ENCODE measurements at regions of chr22 and their contacts with region 1.

Region 1: GRCh38 chr22:35582861-35583670 is 34.1 kb downstream of the MB start:
- DNase-seq: peak; percentile 67 to 88
- H3K4me3 ChIP-seq: no peak overlapping the region
- H3K27ac ChIP-seq: no peak overlapping the region
- H3K4me1 ChIP-seq: peaks cover 0 to 18% (median 4%) of the 10 kb centered on the region in 4 donors
- H3K27me3 ChIP-seq: no peaks in the 10 kb centered on the region
- CTCF ChIP-seq: peak in 5 of 7 experiments; percentile 84 to 92 (median 88)
- EP300 ChIP-seq: no peak
- POLR2A ChIP-seq: no peak

Region 2: DNA sequence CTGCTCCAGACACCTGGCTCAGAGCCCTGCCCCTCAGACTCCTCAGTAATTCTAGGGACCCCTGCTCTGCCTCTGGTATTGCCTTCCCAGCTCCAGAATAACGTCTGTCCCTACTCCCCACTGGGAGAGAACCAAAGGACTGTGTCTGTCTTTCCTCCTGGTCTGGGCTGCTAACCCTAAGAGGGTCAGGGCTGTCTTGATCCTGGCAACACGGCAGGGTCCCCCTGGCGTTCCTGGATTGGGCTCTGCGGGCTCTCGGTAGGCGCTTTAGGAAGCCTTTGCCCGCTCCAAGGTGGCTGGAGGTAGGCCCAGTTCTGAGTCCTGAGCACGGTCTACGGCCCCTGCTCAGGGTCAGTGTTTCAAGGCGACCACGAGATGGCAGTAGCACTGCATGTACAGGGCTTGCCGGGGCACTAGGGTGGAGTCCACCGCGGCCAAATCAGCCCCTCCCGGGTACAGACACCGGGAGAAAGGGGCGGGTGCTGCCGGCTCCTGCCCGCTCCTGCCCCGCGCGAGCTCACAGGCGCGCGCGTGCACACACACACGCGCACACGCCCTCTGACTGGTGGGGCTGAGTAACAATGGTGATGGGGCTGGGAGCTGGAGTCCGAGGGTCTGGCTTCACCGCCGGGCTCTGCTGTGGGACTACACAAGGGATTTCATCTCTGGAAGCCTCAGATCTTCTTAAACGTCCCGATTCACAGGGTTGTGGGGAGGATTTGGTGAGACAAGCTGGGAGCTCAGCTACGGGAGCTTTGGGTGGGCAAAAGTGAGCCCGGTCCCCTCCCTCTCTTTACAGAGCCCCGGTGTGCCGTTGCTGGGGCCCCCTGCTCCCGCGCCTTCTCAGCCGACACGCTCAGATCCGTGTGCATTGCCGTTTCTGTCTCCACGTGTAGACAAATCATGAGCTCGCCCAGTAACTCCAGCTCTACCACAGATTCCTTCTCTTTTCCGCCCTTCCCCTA is 232.2 kb before region 1 on chr22:
- intact Hi-C with region 1: loop called (anchors 5 kb)
- DNase-seq: peak; percentile 92 to 97
- H3K4me3 ChIP-seq: peak overlapping the region; percentile 50 to 57 (median 54)
- H3K27ac ChIP-seq: peak overlapping the region in 4 of 5 donors; percentile 61 to 87 (median 82)
- H3K4me1 ChIP-seq: peaks cover 20 to 54% (median 28%) of the 10 kb centered on the region in 4 donors
- H3K27me3 ChIP-seq: no peaks in the 10 kb centered on the region
- CTCF ChIP-seq: peak in 5 of 7 experiments; percentile 84 to 95 (median 87)
- EP300 ChIP-seq: no peak
- POLR2A ChIP-seq: no peak

Region 3: DNA sequence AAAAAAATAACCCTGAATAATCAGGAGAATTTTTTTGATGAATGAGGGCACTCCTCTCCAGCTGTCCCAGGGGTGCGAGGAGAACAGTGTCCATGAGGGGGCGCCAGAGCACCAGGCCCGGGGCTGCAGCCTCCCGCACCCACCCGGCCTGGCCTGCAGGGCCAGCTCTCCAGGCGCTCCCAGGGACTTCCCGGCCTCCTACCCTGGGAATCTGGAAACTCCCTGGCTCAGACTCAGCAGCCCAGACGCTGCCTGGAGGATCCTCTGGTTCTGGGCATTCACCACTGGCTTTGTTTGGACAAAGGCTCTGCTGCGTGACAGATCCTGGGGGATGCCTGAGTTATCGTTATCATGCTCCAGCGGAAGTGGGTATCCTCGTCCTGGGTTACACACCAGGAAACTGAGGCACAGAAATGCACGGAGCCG is 152.2 kb before region 1 on chr22:
- intact Hi-C with region 1: loop called (anchors 2 kb)
- DNase-seq: peak; percentile 92 to 95
- H3K4me3 ChIP-seq: no peak overlapping the region
- H3K27ac ChIP-seq: peak overlapping the region in 3 of 5 donors; percentile 53 to 67 (median 53)
- H3K4me1 ChIP-seq: peaks cover 0 to 14% (median 7%) of the 10 kb centered on the region in 4 donors
- H3K27me3 ChIP-seq: no peaks in the 10 kb centered on the region
- CTCF ChIP-seq: peak in 6 of 7 experiments; percentile 42 to 99 (median 96)
- EP300 ChIP-seq: no peak
- POLR2A ChIP-seq: no peak

Region 4: DNA sequence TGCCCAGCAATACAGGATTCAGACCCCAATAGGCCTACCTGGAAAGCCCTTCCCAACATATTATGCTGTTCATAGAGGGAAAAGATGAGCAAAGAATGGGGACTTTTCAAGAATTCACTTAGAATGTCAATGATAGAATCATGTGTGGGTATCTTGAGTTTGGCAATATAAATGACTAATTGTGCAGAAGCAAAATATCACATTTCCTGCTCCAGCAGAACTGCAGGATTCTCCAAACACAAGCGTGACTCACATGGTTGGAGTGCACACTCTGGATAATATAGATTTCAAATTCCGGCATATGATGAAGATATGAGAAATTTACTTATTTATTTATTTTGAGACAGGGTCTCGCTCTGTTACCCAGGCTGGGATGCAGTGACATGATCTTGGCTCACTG is 122.1 kb after region 1 on chr22:
- intact Hi-C with region 1: no loop called
- DNase-seq: no peak
- H3K4me3 ChIP-seq: no peak overlapping the region
- H3K27ac ChIP-seq: no peak overlapping the region
- H3K4me1 ChIP-seq: peaks cover 0 to 11% (median 0%) of the 10 kb centered on the region in 4 donors
- H3K27me3 ChIP-seq: no peaks in the 10 kb centered on the region
- CTCF ChIP-seq: no peak
- EP300 ChIP-seq: no peak
- POLR2A ChIP-seq: no peak

Measured in stomach (tissue), 19 donors.